Naive thymus-derived CD4-positive, alpha-beta T cell (primary cell): ENCODE measurements at regions of chr12 and their contacts with region 1.

Region 1: GRCh38 chr12:6778574-6779550 is 6.5 kb downstream of the LAG3 start:
- DNase-seq: peak; percentile 73 to 88 (median 84)
- ATAC-seq: peak; percentile 95
- H3K4me3 ChIP-seq: peak overlapping the region; percentile 69
- H3K4me3 Mint-ChIP-seq: peak overlapping the region; percentile 85 to 94 (median 87)
- H3K27ac ChIP-seq: peak overlapping the region; percentile 27
- H3K27ac Mint-ChIP-seq: peak overlapping the region; percentile 75 to 96 (median 86)
- H3K4me1 ChIP-seq: peaks cover 18 to 56% of the 10 kb centered on the region in 2 donors
- H3K4me1 Mint-ChIP-seq: peaks cover 36 to 77% (median 60%) of the 10 kb centered on the region in 7 donors
- H3K27me3 ChIP-seq: no peaks in the 10 kb centered on the region
- H3K27me3 Mint-ChIP-seq: peaks cover 0 to 15% (median 5%) of the 10 kb centered on the region in 5 donors

Region 2: GRCh38 chr12:6563448-6564050 is 215.3 kb before region 1 on chr12:
- CTCF ChIA-PET with region 1: interaction called, 3 read pairs
- POLR2A ChIA-PET with region 1: no interaction called
- intact Hi-C with region 1: loop called (anchors 1 to 5 kb)
- DNase-seq: peak; percentile 36 to 68 (median 52)
- ATAC-seq: peak; percentile 43
- H3K4me3 ChIP-seq: no peak overlapping the region
- H3K4me3 Mint-ChIP-seq: peak overlapping the region in 2 of 10 donors; percentile 6 to 55
- H3K27ac ChIP-seq: no peak overlapping the region
- H3K27ac Mint-ChIP-seq: peak overlapping the region in 7 of 9 donors; percentile 9 to 86 (median 78)
- H3K4me1 ChIP-seq: peaks cover 8 to 14% of the 10 kb centered on the region in 2 donors
- H3K4me1 Mint-ChIP-seq: peaks cover 22 to 54% (median 41%) of the 10 kb centered on the region in 7 donors
- H3K27me3 ChIP-seq: no peaks in the 10 kb centered on the region
- H3K27me3 Mint-ChIP-seq: no peaks in the 10 kb centered on the region

Region 3: DNA sequence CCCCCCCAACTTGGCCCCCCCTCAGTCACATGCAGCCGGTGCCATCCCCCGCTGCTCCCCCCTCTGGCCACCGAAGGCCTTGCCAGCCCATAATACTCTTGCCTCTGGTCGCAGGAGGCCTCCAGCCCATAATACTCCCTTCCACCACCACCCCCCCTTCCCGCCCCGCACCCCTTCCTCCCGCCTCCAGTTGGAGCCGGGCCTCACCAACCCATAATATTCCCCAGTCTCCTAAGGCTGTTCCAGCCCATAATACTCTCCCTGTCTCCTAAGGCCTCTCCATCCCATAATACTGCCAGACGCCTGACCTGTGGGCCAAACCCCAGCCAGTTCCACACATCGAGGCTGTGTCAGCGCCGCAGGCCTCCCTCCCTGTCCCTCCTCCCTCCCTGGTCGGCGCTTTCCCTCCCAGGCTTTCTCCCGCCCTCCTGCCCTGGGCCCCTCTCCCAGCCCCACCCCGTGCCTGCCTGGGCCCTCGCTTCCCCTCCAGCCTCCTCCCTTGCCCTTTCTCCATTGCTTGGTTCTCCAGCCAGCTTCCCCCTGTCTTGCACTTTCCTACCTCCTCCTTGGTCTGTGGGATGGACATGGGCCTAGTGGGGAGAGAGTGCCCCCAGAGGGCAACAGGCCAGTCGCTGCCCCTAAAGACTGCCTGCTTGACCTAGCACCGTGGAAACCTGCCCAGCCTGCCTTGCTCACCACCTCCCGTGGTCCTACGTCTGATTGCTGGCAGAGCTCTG is 164.9 kb before region 1 on chr12:
- CTCF ChIA-PET with region 1: interaction called, 4 read pairs
- POLR2A ChIA-PET with region 1: interaction called, 3 read pairs
- intact Hi-C with region 1: loop called (anchors 1 kb)
- DNase-seq: peak in 2 of 9 donors; percentile 28 to 32
- ATAC-seq: peak; percentile 74
- H3K4me3 ChIP-seq: no peak overlapping the region
- H3K4me3 Mint-ChIP-seq: peak overlapping the region in 7 of 10 donors; percentile 30 to 70 (median 36)
- H3K27ac ChIP-seq: peak overlapping the region; percentile 64
- H3K27ac Mint-ChIP-seq: peak overlapping the region; percentile 51 to 91 (median 87)
- H3K4me1 ChIP-seq: peaks cover 20 to 30% of the 10 kb centered on the region in 2 donors
- H3K4me1 Mint-ChIP-seq: peaks cover 26 to 54% (median 48%) of the 10 kb centered on the region in 7 donors
- H3K27me3 ChIP-seq: no peaks in the 10 kb centered on the region
- H3K27me3 Mint-ChIP-seq: no peaks in the 10 kb centered on the region

Region 4: GRCh38 chr12:6764011-6764828 is 14.6 kb before region 1 on chr12:
- CTCF ChIA-PET with region 1: interaction called, 24 read pairs
- POLR2A ChIA-PET with region 1: interaction called, 6 read pairs
- intact Hi-C with region 1: loop called in 1 of 2 experiments (anchors 1 kb)
- DNase-seq: peak in 7 of 9 donors; percentile 40 to 69 (median 55)
- ATAC-seq: peak; percentile 88
- H3K4me3 ChIP-seq: no peak overlapping the region
- H3K4me3 Mint-ChIP-seq: peak overlapping the region; percentile 18 to 96 (median 67)
- H3K27ac ChIP-seq: no peak overlapping the region
- H3K27ac Mint-ChIP-seq: peak overlapping the region in 4 of 9 donors; percentile 9 to 71 (median 43)
- H3K4me1 ChIP-seq: peaks cover 7 to 16% of the 10 kb centered on the region in 2 donors
- H3K4me1 Mint-ChIP-seq: peaks cover 22 to 38% (median 31%) of the 10 kb centered on the region in 7 donors
- H3K27me3 ChIP-seq: no peaks in the 10 kb centered on the region
- H3K27me3 Mint-ChIP-seq: peaks cover 5 to 38% (median 26%) of the 10 kb centered on the region in 5 donors

Region 5: GRCh38 chr12:6825398-6826124 is 46.7 kb after region 1 on chr12:
- CTCF ChIA-PET with region 1: interaction called, 8 read pairs
- POLR2A ChIA-PET with region 1: interaction called, 9 read pairs
- intact Hi-C with region 1: loop called in 1 of 2 experiments (anchors 1 kb)
- DNase-seq: peak; percentile 69 to 89 (median 78)
- ATAC-seq: peak; percentile 79
- H3K4me3 ChIP-seq: no peak overlapping the region
- H3K4me3 Mint-ChIP-seq: peak overlapping the region in 7 of 10 donors; percentile 5 to 65 (median 35)
- H3K27ac ChIP-seq: no peak overlapping the region
- H3K27ac Mint-ChIP-seq: peak overlapping the region in 4 of 9 donors; percentile 22 to 84 (median 53)
- H3K4me1 ChIP-seq: peaks cover 4 to 13% of the 10 kb centered on the region in 2 donors
- H3K4me1 Mint-ChIP-seq: peaks cover 27 to 42% (median 39%) of the 10 kb centered on the region in 7 donors
- H3K27me3 ChIP-seq: peaks cover 0 to 12% of the 10 kb centered on the region in 2 donors
- H3K27me3 Mint-ChIP-seq: peaks cover 9 to 63% (median 26%) of the 10 kb centered on the region in 5 donors